Activated CD8-positive, alpha-beta memory T cell treated with anti-CD3 and anti-CD28 coated beads, Interleukin-2, amount 10 ng/mL, durations not matched to agents 7 days and 5 days (primary cell): ENCODE measurements at regions of chr6 and their contacts with region 1.

Region 1: DNA sequence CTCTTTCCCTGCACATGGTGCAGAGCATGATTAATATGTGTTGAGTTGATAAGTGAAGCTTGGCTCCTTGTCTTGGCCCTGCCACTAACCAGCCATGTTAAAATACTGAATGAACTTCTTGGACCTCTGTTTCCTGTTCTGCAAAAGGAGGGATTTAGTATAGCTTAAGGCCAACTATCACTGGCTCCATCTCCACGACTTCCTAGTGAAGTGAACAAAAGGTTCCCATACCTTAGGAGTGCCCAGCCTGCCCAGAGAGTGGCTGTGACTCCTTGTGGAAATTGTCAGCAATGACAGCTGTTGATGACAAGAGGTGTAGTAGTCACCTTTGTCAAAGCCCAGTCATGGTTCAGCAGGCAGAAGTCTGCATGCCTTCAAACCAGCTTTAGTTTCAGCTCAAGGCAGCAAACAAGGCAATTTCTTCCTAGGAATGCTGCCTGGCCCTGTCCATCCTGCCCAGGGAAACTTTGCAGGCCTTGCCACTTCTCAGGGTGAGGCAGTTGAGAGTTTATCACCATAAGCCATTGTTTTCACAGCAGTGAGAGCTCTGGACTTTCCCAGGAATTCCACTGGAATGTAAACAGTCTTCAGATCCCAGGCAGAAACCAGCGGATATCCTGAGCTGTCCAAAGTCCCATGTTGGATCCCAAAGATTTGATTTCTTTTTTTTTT is 169.7 kb upstream of the TNFAIP3 start:
- DNase-seq: no peak
- ATAC-seq: peak; percentile 32
- H3K4me3 Mint-ChIP-seq: no peak overlapping the region
- H3K27ac Mint-ChIP-seq: peak overlapping the region; percentile 47
- H3K4me1 Mint-ChIP-seq: peaks cover 57% of the 10 kb centered on the region
- H3K27me3 Mint-ChIP-seq: no peaks in the 10 kb centered on the region

Region 2: DNA sequence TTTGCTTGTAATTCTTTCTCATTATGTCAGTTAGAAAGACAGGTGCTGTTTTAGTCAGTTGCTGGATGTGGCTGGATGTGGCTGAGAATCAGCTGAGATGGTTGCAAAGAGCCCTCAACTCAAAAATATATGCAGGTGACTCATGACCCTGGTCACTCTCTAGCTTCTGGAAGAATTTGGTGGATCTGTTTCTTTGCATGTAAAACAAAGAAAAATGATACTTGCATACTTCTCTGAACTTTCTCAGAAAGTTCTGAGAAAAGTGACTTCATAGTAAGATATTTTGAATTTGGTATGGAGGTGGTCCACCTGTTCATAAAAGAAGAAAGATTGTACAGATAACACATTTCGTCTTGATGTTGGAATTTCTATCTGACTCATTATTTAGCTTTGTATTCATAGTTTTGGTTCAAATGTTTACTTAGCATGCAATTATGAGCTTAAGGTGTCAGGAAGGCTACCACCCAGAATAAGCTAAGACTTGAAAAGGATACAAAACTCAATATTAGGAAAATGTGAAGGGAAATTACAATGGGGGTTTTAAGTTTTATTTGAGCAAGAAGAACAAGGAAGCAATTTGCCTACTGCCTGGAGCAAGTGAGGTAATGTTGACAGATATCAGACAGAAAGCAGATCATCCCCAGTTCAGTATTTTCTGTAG is 39.9 kb before region 1 on chr6:
- CTCF ChIA-PET with region 1: interaction called, 18 read pairs
- DNase-seq: peak; percentile 81
- ATAC-seq: peak; percentile 80
- H3K4me3 Mint-ChIP-seq: no peak overlapping the region
- H3K27ac Mint-ChIP-seq: peak overlapping the region; percentile 72
- H3K4me1 Mint-ChIP-seq: peaks cover 39% of the 10 kb centered on the region
- H3K27me3 Mint-ChIP-seq: no peaks in the 10 kb centered on the region

Region 3: GRCh38 chr6:137666202-137666774 is 31.1 kb before region 1 on chr6:
- CTCF ChIA-PET with region 1: interaction called, 11 read pairs
- DNase-seq: no peak
- ATAC-seq: peak; percentile 74
- H3K4me3 Mint-ChIP-seq: peak overlapping the region; percentile 67
- H3K27ac Mint-ChIP-seq: peak overlapping the region; percentile 85
- H3K4me1 Mint-ChIP-seq: peaks cover 40% of the 10 kb centered on the region
- H3K27me3 Mint-ChIP-seq: peaks cover 2% of the 10 kb centered on the region

Region 4: DNA sequence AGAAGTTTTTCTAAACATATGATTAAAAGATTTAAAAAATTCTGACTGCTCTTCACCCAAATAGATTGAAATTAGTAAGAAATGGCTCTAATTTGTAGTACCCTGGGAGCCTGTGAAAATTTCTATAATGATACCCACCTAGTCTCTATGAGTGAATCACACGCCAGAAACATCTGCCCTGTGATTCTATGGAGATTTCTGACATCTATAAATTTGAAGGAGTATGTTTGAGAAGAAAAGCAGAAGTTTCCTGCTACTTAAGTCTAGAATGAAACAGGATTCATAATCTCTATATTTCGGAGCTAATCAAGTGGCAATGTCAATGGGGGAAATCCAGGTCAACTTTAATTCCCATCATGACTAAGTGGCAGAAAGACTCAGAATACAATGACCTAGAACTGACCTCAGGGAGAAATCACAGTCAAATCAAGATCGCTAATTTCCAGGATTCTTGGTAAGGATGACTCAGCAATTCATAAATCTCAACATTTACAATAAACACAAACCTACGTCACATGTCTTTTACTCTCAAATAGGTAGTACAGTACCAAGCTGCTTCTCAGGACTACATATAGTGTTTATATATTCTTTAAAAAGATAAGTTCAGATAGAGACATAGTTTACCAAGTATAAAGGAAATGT is 16.6 kb before region 1 on chr6:
- CTCF ChIA-PET with region 1: interaction called, 29 read pairs
- DNase-seq: no peak
- ATAC-seq: peak; percentile 71
- H3K4me3 Mint-ChIP-seq: peak overlapping the region; percentile 16
- H3K27ac Mint-ChIP-seq: peak overlapping the region; percentile 72
- H3K4me1 Mint-ChIP-seq: peaks cover 67% of the 10 kb centered on the region
- H3K27me3 Mint-ChIP-seq: no peaks in the 10 kb centered on the region

Region 5: GRCh38 chr6:137937834-137938233 is 240.4 kb after region 1 on chr6:
- CTCF ChIA-PET with region 1: interaction called, 18 read pairs
- DNase-seq: no peak
- ATAC-seq: no peak
- H3K4me3 Mint-ChIP-seq: no peak overlapping the region
- H3K27ac Mint-ChIP-seq: no peak overlapping the region
- H3K4me1 Mint-ChIP-seq: peaks cover 30% of the 10 kb centered on the region
- H3K27me3 Mint-ChIP-seq: no peaks in the 10 kb centered on the region

Region 6: GRCh38 chr6:138001750-138002349 is 304.4 kb after region 1 on chr6:
- CTCF ChIA-PET with region 1: interaction called, 11 read pairs
- DNase-seq: peak; percentile 77
- ATAC-seq: no peak
- H3K4me3 Mint-ChIP-seq: no peak overlapping the region
- H3K27ac Mint-ChIP-seq: no peak overlapping the region
- H3K4me1 Mint-ChIP-seq: peaks cover 11% of the 10 kb centered on the region
- H3K27me3 Mint-ChIP-seq: peaks cover 3% of the 10 kb centered on the region